CD8-positive, alpha-beta T cell (primary cell): ENCODE measurements at regions of chr12 and their contacts with region 1.

Region 1: DNA sequence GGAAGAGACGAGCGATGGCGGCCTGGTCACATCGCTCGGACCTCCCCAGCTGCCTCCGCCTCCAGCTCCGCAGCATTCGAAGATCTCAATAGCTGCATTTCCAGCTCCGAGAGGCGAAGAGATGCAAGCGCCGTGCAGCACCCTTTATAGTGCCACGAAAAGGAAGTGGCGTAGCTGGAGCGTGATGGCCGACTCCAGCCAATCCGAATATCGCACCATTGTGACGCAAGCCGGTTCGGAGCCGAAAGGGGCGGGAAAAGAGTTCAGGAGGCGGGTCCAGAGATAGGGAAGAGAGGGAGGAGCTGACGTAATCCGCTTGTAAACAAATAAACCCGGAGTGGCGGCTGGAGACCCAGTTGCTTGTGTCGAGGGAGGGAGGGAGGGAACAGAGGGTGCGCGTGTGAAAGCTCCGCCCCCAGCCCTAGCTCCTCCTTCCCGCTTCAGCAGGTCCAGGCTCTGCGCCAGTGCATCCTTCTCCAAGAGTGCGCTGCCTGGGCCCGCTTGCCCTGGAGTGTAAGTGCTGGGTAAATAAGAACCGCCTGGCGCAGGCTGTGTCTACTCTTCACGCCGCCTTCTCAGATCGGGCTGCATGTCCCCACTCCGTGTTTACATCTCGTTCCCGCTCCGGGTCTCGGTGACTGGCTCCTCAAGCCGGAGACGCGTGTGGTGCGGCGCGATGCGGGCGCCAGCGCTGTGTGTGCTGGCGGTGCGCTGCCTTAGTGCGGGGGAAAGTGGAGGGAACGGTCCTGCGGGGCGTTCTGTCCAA is at the start of gene BTG1:
- DNase-seq: peak; percentile 96 to 100 (median 98)
- ATAC-seq: peak; percentile 72
- H3K4me3 ChIP-seq: peak within 1 kb of the TSS; percentile 91 to 95
- H3K4me3 Mint-ChIP-seq: peak within 1 kb of the TSS; percentile 96
- H3K27ac ChIP-seq: peak within 1 kb of the TSS; percentile 90 to 92
- H3K27ac Mint-ChIP-seq: peak within 1 kb of the TSS; percentile 99
- H3K4me1 ChIP-seq: peaks cover 23% of the 10 kb centered on the region
- H3K4me1 Mint-ChIP-seq: peaks cover 27% of the 10 kb centered on the region
- H3K27me3 ChIP-seq: no peaks in the 10 kb centered on the region
- H3K27me3 Mint-ChIP-seq: no peaks in the 10 kb centered on the region
- CTCF ChIP-seq: no peak
- total RNA-seq, gene BTG1: 1,847 to 1,850 TPM

Region 2: GRCh38 chr12:91811481-91812287 is 334.2 kb before region 1 on chr12:
- CTCF ChIA-PET with region 1: interaction called, 16 read pairs
- POLR2A ChIA-PET with region 1: interaction called, 16 read pairs
- intact Hi-C with region 1: loop called (anchors 1 to 5 kb)
- DNase-seq: peak; percentile 69 to 87 (median 81)
- ATAC-seq: peak; percentile 89
- H3K4me3 ChIP-seq: no peak overlapping the region
- H3K4me3 Mint-ChIP-seq: no peak overlapping the region
- H3K27ac ChIP-seq: no peak overlapping the region
- H3K27ac Mint-ChIP-seq: peak overlapping the region; percentile 89
- H3K4me1 ChIP-seq: peaks cover 5% of the 10 kb centered on the region
- H3K4me1 Mint-ChIP-seq: peaks cover 30% of the 10 kb centered on the region
- H3K27me3 ChIP-seq: no peaks in the 10 kb centered on the region
- H3K27me3 Mint-ChIP-seq: no peaks in the 10 kb centered on the region
- CTCF ChIP-seq: peak; percentile 84

Region 3: DNA sequence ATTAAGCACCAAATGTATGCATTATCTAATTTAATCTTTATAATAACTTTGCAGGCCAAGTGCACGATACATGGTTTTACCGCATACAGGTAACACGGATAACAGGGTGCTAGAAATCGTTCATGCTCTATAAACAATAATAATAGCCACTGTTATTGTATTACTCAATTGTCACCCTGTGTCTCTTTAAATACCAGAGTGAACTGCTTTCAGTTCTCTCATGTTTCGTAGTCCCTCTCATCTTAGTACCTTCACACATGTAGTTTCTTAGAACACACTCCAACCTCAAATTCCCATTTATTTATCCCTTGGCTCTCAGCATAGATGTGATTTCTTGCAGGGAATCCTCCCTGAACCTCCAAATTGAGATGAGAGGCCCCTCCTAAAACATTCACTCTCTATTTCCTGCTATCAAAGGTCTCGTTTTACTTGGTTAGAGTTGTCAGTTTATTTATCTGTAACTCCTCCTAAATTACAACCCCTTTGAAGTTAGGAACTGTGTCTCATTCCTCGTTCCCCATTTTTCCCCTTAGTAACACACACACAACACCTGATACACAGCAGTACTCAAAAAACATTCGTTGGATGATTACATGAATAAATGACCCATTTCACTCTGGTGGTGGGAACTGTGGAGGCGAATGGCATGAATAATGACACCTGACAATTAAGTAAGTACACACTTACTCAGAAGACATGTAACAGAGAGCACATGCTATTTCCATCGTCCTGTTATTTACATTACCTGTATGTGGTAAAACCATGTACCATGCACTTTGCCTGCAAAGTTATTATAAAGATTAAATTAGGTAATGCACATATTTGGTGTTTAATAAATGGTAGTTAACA is 134.8 kb before region 1 on chr12:
- CTCF ChIA-PET with region 1: interaction called, 5 read pairs
- POLR2A ChIA-PET with region 1: interaction called, 19 read pairs
- intact Hi-C with region 1: no loop called
- DNase-seq: no peak
- ATAC-seq: peak; percentile 17
- H3K4me3 ChIP-seq: no peak overlapping the region
- H3K4me3 Mint-ChIP-seq: peak overlapping the region; percentile 76
- H3K27ac ChIP-seq: peak overlapping the region in 1 of 2 experiments; percentile 26
- H3K27ac Mint-ChIP-seq: peak overlapping the region; percentile 92
- H3K4me1 ChIP-seq: peaks cover 32% of the 10 kb centered on the region
- H3K4me1 Mint-ChIP-seq: peaks cover 45% of the 10 kb centered on the region
- H3K27me3 ChIP-seq: no peaks in the 10 kb centered on the region
- H3K27me3 Mint-ChIP-seq: no peaks in the 10 kb centered on the region
- CTCF ChIP-seq: no peak

Region 4: DNA sequence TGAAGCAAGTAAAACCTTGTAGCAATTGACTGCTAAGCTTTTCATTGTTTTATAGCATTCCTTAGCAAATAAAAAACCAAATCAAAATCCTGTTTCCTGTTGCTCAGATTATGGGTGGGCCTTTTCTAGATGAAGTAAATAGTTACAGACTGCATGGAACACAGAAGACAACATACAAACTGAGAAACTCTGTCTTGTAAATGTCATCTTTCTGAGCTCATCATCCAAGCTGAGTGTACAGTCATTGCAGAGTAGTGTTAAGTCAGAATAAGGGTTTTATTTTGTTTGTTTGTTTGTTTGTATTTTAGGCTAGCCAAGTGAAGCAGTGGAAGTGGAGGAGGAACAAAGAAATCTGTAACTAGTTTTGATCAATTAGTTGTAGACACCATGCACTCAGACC is 24.1 kb after region 1 on chr12:
- CTCF ChIA-PET with region 1: interaction called, 3 read pairs
- POLR2A ChIA-PET with region 1: interaction called, 10 read pairs
- intact Hi-C with region 1: no loop called
- DNase-seq: no peak
- ATAC-seq: no peak
- H3K4me3 ChIP-seq: no peak overlapping the region
- H3K4me3 Mint-ChIP-seq: no peak overlapping the region
- H3K27ac ChIP-seq: no peak overlapping the region
- H3K27ac Mint-ChIP-seq: no peak overlapping the region
- H3K4me1 ChIP-seq: no peaks in the 10 kb centered on the region
- H3K4me1 Mint-ChIP-seq: peaks cover 16% of the 10 kb centered on the region
- H3K27me3 ChIP-seq: no peaks in the 10 kb centered on the region
- H3K27me3 Mint-ChIP-seq: no peaks in the 10 kb centered on the region
- CTCF ChIP-seq: no peak

Region 5: GRCh38 chr12:92396647-92397252 is 250.8 kb after region 1 on chr12:
- CTCF ChIA-PET with region 1: interaction called, 11 read pairs
- POLR2A ChIA-PET with region 1: interaction called, 185 read pairs
- intact Hi-C with region 1: loop called in 1 of 2 experiments (anchors 2 kb)
- DNase-seq: no peak
- ATAC-seq: no peak
- H3K4me3 ChIP-seq: no peak overlapping the region
- H3K4me3 Mint-ChIP-seq: peak overlapping the region; percentile 4
- H3K27ac ChIP-seq: peak overlapping the region; percentile 2 to 46
- H3K27ac Mint-ChIP-seq: peak overlapping the region; percentile 95
- H3K4me1 ChIP-seq: peaks cover 88% of the 10 kb centered on the region
- H3K4me1 Mint-ChIP-seq: peaks cover 93% of the 10 kb centered on the region
- H3K27me3 ChIP-seq: no peaks in the 10 kb centered on the region
- H3K27me3 Mint-ChIP-seq: no peaks in the 10 kb centered on the region
- CTCF ChIP-seq: no peak

Region 6: GRCh38 chr12:92562063-92562734 is 416.3 kb after region 1 on chr12:
- CTCF ChIA-PET with region 1: interaction called, 4 read pairs
- POLR2A ChIA-PET with region 1: interaction called, 16 read pairs
- intact Hi-C with region 1: no loop called
- DNase-seq: no peak
- ATAC-seq: no peak
- H3K4me3 ChIP-seq: no peak overlapping the region
- H3K4me3 Mint-ChIP-seq: no peak overlapping the region
- H3K27ac ChIP-seq: no peak overlapping the region
- H3K27ac Mint-ChIP-seq: no peak overlapping the region
- H3K4me1 ChIP-seq: peaks cover 4% of the 10 kb centered on the region
- H3K4me1 Mint-ChIP-seq: peaks cover 25% of the 10 kb centered on the region
- H3K27me3 ChIP-seq: no peaks in the 10 kb centered on the region
- H3K27me3 Mint-ChIP-seq: no peaks in the 10 kb centered on the region
- CTCF ChIP-seq: no peak

Region 7: DNA sequence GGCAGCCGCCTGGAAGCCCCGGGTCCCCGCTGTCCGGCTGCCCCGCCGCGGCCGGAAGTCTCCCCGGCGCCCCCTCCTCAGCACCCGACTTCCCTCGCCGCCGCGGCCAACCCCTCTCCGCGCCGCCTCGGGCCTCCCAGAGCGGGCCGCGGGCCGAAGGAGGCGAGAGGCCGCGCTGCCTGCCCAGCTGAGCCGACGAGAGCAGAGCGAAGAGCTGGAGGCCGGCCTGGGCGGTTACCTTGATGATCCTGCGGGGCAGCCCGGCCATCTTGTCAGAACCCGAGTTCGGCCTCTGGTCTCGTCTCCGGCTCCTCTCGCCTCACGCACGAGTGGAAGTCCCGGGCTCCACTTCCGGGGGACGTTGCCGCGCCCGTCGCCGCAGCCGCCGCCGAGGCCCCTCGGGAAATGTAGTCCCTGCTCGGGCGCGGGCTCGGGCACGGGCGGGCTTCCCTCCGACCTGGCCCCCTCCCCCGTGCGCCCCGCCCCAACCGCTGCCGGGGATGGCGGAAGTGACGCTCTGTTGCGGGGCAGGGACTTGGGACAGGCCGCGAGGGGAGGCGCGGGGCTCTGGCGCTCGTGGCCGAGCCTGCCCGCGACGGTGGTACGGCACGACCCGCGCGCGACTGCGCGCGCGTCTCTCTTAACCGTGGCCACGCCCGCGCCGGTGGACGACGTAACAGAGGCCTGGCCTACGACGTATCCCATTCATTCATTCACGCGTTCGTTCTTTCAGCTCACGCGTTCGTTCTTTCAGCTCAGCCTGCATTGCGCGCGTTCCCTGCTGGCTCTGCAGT is 1295.9 kb after region 1 on chr12 and contains the start of gene UBE2N:
- CTCF ChIA-PET with region 1: no interaction called
- POLR2A ChIA-PET with region 1: no interaction called
- intact Hi-C with region 1: loop called in 1 of 2 experiments (anchors 10 kb)
- DNase-seq: peak; percentile 92 to 97 (median 96)
- ATAC-seq: peak; percentile 83
- H3K4me3 ChIP-seq: peak within 1 kb of the TSS; percentile 78
- H3K4me3 Mint-ChIP-seq: peak within 1 kb of the TSS; percentile 97
- H3K27ac ChIP-seq: peak within 1 kb of the TSS; percentile 87 to 90
- H3K27ac Mint-ChIP-seq: peak within 1 kb of the TSS; percentile 96
- H3K4me1 ChIP-seq: peaks cover 47% of the 10 kb centered on the region
- H3K4me1 Mint-ChIP-seq: peaks cover 48% of the 10 kb centered on the region
- H3K27me3 ChIP-seq: no peaks in the 10 kb centered on the region
- H3K27me3 Mint-ChIP-seq: no peaks in the 10 kb centered on the region
- CTCF ChIP-seq: no peak
- total RNA-seq, gene UBE2N: 89.5 to 93.6 TPM